Prostate gland (tissue), 2 donors: ENCODE measurements at regions of chr16 and their contacts with region 1.

Region 1: DNA sequence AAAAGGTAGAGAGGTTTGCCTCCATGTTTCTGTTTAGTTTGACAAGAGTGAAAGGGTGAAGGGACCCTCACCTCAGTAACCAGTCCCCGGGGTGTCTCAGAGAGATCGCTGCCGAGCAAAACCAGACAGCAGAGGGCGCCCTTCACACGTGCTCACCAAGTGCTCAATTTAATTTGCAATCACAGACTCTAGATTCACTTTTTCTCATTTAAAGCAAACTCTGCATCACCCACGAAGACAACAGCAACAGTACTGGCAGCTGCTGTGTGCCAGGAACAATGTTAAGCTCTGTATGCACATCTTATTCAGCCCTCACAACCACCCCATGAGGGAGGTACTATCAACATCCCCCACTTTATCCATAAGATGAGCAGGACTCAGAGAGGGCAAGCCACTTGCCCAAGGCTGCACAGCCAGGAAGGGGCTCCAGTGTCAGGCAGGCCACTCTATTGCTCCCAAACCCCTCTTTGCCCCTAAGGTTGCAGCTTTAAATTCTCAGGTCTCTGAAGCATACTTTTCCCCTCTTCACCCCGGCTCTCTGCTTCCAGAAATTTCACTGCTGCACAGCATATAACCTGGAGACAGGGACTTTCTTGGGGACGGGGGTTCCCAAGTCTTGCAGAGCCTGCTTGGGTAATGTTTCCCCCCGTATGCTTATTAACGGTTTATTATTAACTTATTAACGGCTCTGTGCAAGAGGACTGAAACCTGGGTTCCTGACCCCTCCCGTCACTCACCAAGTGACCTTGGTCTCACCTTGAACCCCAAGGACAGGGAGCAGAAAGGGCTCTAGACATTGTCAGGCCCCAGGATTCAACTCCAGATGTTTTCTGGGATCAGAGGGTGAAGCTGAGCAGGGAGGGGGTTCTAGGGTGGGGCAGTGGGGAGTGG is 70.9 kb downstream of the CNGB1 start:
- DNase-seq: peak; percentile 66
- H3K4me3 ChIP-seq: no peak overlapping the region
- H3K27ac ChIP-seq: no peak overlapping the region
- H3K4me1 ChIP-seq: no peaks in the 10 kb centered on the region
- H3K27me3 ChIP-seq: peaks cover 2% of the 10 kb centered on the region
- CTCF ChIP-seq: peak; percentile 76 to 86 (median 84)
- POLR2A ChIP-seq: no peak

Region 2: DNA sequence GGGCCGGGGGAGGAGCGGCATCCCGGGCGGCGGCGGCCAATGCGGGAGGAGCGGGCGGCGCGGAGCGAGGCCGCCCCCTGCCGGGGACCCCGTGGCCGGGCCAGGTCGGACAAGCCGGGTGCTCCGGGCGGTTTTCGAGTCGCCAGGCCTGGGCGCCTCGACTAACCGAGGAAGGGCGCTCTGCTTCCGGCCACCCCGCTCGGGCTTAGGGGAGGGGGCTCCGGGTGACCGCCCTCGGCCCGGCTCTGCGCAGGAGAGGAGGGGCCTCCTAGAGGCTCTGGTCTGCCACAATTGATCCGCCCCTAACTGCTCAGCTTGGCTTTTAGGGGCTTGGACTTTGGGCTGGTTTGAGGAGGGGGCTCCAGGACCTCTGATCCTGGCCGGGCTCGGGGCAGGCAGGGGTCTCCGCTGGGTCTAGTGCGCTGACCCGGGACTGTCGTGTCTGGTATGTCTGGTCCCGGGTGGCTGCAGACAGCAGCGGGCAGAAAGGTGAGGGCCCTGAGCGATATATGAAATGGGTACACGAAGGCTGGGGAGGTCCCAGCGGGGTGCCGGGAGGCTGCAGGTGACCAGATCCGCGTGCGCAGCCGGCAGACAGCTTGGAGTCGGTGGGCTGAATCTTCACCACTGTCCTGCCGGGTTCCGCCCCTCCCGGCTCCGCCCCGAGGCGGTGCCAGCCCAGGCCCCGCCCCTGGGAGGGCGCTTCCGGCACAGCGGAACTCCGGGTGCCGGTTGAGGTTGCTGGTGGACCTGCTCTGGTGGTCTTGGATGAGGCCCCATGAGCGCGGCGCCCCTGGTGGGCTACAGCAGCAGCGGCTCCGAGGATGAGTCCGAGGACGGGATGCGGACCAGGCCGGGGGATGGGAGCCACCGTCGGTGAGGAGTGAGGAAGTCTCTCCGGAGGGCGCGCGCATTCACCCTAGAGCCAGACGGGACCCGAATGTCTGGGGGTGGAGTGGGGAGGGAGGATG is 101.0 kb after region 1 on chr16 and contains the start of gene USB1:
- intact Hi-C with region 1: loop called (anchors 2 kb)
- DNase-seq: peak; percentile 83
- H3K4me3 ChIP-seq: peak within 1 kb of the TSS; percentile 71 to 82
- H3K27ac ChIP-seq: peak within 1 kb of the TSS; percentile 75 to 79
- H3K4me1 ChIP-seq: peaks cover 10% of the 10 kb centered on the region
- H3K27me3 ChIP-seq: no peaks in the 10 kb centered on the region
- CTCF ChIP-seq: peak; percentile 73 to 83 (median 80)
- POLR2A ChIP-seq: peak; percentile 65
- total RNA-seq, gene USB1: 22.6 to 74.1 TPM

Region 3: GRCh38 chr16:58129097-58129936 is 229.3 kb after region 1 on chr16 and contains the start of gene CFAP20:
- intact Hi-C with region 1: loop called (anchors 10 kb)
- DNase-seq: peak; percentile 99
- H3K4me3 ChIP-seq: peak within 1 kb of the TSS; percentile 87 to 88
- H3K27ac ChIP-seq: peak within 1 kb of the TSS; percentile 80 to 89
- H3K4me1 ChIP-seq: peaks cover 12% of the 10 kb centered on the region
- H3K27me3 ChIP-seq: no peaks in the 10 kb centered on the region
- CTCF ChIP-seq: peak in 1 of 4 experiments; percentile 9
- POLR2A ChIP-seq: peak; percentile 94
- total RNA-seq, gene CFAP20: 27.2 to 77.7 TPM